Left lung (tissue), 14 donors: ENCODE measurements at regions of chr12 and their contacts with region 1.

Region 1: GRCh38 chr12:101830367-101831325 is at the start of gene GNPTAB:
- DNase-seq: peak; percentile 90 to 99 (median 96)
- ATAC-seq: peak; percentile 97
- H3K4me3 ChIP-seq: peak within 1 kb of the TSS; percentile 81 to 82
- H3K27ac ChIP-seq: peak within 1 kb of the TSS; percentile 87 to 93
- H3K4me1 ChIP-seq: peaks cover 8 to 47% of the 10 kb centered on the region in 2 donors
- H3K27me3 ChIP-seq: no peaks in the 10 kb centered on the region
- CTCF ChIP-seq: peak; percentile 71 to 88
- polyA plus RNA-seq, gene GNPTAB: 42.7 to 52.3 (median 50.8) TPM

Region 2: GRCh38 chr12:101414533-101415119 is 416.0 kb before region 1 on chr12:
- intact Hi-C with region 1: loop called in 1 of 2 experiments (anchors 10 kb)
- DNase-seq: peak in 2 of 4 donors; percentile 36 to 58
- ATAC-seq: peak; percentile 76
- H3K4me3 ChIP-seq: no peak overlapping the region
- H3K27ac ChIP-seq: no peak overlapping the region
- H3K4me1 ChIP-seq: no peaks in the 10 kb centered on the region
- H3K27me3 ChIP-seq: no peaks in the 10 kb centered on the region
- CTCF ChIP-seq: peak; percentile 47 to 59

Region 3: GRCh38 chr12:101773650-101774162 is 56.9 kb before region 1 on chr12:
- intact Hi-C with region 1: loop called (anchors 2 to 10 kb)
- DNase-seq: peak in 3 of 4 donors; percentile 38 to 68 (median 59)
- ATAC-seq: peak; percentile 96
- H3K4me3 ChIP-seq: no peak overlapping the region
- H3K27ac ChIP-seq: no peak overlapping the region
- H3K4me1 ChIP-seq: peaks cover 0 to 42% of the 10 kb centered on the region in 2 donors
- H3K27me3 ChIP-seq: no peaks in the 10 kb centered on the region
- CTCF ChIP-seq: peak; percentile 93 to 94